Endothelial cell of umbilical vein (primary cell): ENCODE measurements at regions of chr5 and their contacts with region 1.

Region 1: DNA sequence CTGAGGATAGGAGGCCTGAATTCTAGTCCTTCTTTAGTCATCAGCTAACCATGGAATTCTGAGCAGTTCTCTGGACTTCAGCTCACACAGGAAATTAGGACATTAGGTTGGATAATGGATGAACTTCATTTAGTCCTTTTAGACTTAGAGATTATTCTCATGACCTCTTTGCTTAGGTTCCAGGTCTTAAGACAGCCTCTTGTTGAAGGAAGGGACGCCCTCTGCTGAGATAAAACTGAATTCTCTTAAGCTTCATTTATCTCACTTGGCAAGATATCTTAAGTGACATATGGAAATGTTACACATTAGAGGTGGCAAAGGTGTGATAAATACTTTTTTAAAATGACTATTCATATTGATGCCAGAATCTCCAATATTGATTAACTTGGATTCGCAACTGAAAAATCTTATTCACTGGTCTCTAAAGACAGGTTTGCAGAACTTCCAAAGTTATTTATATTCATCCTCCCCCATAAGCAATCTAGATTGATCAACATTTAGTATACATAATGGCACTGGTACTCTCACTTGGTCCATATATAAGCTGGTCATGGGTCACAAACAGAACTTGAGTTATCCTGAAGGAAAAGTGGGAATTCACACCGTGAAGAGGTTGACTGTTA is 16.9 kb upstream of the ZNF366 start:
- DNase-seq: peak; percentile 89
- H3K4me3 ChIP-seq: no peak overlapping the region
- H3K27ac ChIP-seq: peak overlapping the region; percentile 54
- H3K4me1 ChIP-seq: peaks cover 7% of the 10 kb centered on the region
- H3K27me3 ChIP-seq: no peaks in the 10 kb centered on the region
- CTCF ChIP-seq: peak; percentile 39 to 42
- POLR2A ChIP-seq: no peak

Region 2: DNA sequence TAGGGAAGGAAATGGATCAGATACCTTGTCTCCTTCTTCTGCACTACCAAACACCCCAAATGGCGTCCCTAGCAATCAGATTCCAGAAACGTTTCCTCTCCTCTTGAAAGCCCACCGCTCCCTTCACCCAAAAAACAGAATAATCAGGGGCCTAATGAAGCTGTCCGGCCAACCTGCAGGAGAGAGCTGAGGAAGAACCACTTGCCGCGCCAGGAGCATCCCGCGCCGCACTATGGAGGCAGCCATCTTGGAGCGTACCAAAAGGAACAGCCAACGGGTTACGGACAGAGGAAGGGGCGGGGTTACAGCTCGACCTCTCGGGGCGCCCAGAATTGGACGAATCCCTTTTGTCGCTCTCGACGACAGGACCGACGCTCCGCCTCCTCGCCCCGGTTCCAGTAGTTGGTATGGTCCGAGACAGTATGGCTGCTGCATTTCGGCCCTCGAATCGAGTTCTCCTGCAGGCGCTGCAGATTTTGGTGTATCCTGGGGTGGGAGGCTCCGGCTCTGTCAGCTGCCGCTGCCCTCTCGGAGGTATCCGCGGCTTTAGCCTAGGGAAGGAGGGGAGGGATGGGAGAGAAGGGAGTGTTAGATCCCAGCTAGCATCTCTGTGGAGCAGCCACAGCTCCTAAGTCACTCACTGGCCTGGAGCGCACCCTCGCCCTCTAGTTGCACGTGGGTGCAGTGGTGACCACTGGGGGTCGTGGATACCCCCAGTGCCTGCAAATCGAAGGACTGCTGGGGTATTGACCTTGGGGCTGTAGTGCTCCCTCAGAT is 203.9 kb before region 1 on chr5 and contains the starts of genes MRPS27 and PTCD2:
- CTCF ChIA-PET with region 1: interaction called, 8 read pairs
- POLR2A ChIA-PET with region 1: no interaction called
- dilution Hi-C with region 1: no loop called
- intact Hi-C with region 1: loop called (anchors 1 kb)
- DNase-seq: peak; percentile 98
- H3K4me3 ChIP-seq: peak within 1 kb of the TSS; percentile 49 to 80 (median 70)
- H3K27ac ChIP-seq: peak within 1 kb of the TSS; percentile 14
- H3K4me1 ChIP-seq: peaks cover 6% of the 10 kb centered on the region
- H3K27me3 ChIP-seq: no peaks in the 10 kb centered on the region
- CTCF ChIP-seq: peak; percentile 8 to 28
- POLR2A ChIP-seq: peak; percentile 97
- total RNA-seq, gene MRPS27: 58.0 and 67.1 TPM in 2 replicates
- total RNA-seq, gene PTCD2: 6.2 and 6.7 TPM in 2 replicates

Region 3: DNA sequence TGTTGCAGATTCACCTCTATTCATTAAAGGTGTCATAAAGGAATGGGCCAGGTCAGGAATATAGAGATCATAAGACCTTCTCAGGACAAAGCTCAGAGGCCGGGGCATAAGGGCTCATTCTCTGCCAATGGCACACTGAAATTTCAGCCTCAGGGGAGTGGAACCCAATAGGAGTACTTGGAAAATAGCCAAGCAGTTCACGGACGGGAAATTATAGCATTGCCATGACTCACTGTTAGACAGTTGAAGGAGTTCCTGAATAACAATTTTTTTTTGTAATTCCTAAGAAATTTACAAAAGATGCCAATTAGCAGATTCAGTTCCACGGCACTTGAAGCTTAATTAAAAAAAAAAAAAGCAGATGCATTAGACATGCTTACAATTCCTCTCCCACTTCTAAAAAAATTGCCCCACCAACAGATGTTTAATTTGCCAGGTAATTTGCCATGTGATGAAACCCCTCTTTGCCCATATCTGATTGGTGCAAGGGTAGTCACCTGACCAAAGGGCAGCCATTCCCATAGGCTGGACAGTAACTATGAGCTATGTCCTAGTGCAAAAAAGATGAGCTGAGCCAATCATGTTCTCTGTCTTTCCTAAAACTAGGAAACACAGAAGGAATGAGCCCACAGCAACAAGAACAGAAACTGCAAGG is 145.3 kb before region 1 on chr5:
- CTCF ChIA-PET with region 1: interaction called, 15 read pairs
- POLR2A ChIA-PET with region 1: no interaction called
- dilution Hi-C with region 1: no loop called
- intact Hi-C with region 1: no loop called
- DNase-seq: peak; percentile 96
- H3K4me3 ChIP-seq: no peak overlapping the region
- H3K27ac ChIP-seq: peak overlapping the region; percentile 30
- H3K4me1 ChIP-seq: peaks cover 15% of the 10 kb centered on the region
- H3K27me3 ChIP-seq: no peaks in the 10 kb centered on the region
- CTCF ChIP-seq: no peak
- POLR2A ChIP-seq: no peak

Region 4: GRCh38 chr5:72402959-72403628 is 121.0 kb before region 1 on chr5:
- CTCF ChIA-PET with region 1: interaction called, 28 read pairs
- POLR2A ChIA-PET with region 1: no interaction called
- dilution Hi-C with region 1: no loop called
- intact Hi-C with region 1: loop called (anchors 1 kb)
- DNase-seq: peak; percentile 78
- H3K4me3 ChIP-seq: no peak overlapping the region
- H3K27ac ChIP-seq: no peak overlapping the region
- H3K4me1 ChIP-seq: no peaks in the 10 kb centered on the region
- H3K27me3 ChIP-seq: no peaks in the 10 kb centered on the region
- CTCF ChIP-seq: peak; percentile 34 to 35
- POLR2A ChIP-seq: no peak

Region 5: GRCh38 chr5:72451741-72452505 is 72.1 kb before region 1 on chr5:
- CTCF ChIA-PET with region 1: interaction called, 42 read pairs
- POLR2A ChIA-PET with region 1: no interaction called
- dilution Hi-C with region 1: no loop called
- intact Hi-C with region 1: loop called (anchors 1 kb)
- DNase-seq: peak; percentile 98
- H3K4me3 ChIP-seq: no peak overlapping the region
- H3K27ac ChIP-seq: peak overlapping the region; percentile 100
- H3K4me1 ChIP-seq: peaks cover 49% of the 10 kb centered on the region
- H3K27me3 ChIP-seq: no peaks in the 10 kb centered on the region
- CTCF ChIP-seq: no peak
- POLR2A ChIP-seq: peak; percentile 48

Region 6: GRCh38 chr5:72537166-72537565 is 13.1 kb after region 1 on chr5:
- CTCF ChIA-PET with region 1: interaction called, 10 read pairs
- POLR2A ChIA-PET with region 1: no interaction called
- dilution Hi-C with region 1: no loop called
- intact Hi-C with region 1: no loop called
- DNase-seq: no peak
- H3K4me3 ChIP-seq: no peak overlapping the region
- H3K27ac ChIP-seq: no peak overlapping the region
- H3K4me1 ChIP-seq: no peaks in the 10 kb centered on the region
- H3K27me3 ChIP-seq: no peaks in the 10 kb centered on the region
- CTCF ChIP-seq: no peak
- POLR2A ChIP-seq: no peak

Region 7: DNA sequence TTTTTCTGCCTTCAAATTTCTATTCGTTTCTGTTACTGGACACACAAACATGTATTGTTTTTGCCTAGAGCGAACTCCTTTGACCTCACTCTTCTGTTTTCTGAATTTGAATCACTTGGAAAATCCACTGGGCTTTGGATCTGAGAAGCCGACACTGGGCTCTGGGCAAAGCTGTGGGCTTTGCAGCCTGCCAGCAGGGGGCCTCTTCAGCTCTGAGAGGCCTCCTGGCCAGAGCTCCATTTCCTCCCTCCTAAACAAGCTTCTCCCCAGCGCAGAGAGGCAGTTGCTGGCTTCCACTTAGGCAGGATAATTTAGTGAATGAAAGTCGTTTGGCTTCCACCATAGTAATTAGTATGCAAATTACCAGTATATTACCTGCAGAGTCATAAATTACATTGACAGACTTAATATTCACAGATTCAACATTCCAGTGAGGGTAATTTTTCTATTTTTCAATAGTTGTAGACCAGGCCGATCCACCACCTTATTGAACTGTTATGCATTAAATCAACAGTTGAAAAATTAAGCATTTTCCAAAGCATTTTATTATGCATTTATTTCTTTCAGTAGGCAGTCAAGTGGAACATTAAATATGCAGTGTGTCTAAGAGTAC is 87.2 kb after region 1 on chr5:
- CTCF ChIA-PET with region 1: interaction called, 15 read pairs
- POLR2A ChIA-PET with region 1: no interaction called
- dilution Hi-C with region 1: no loop called
- intact Hi-C with region 1: no loop called
- DNase-seq: peak; percentile 85
- H3K4me3 ChIP-seq: no peak overlapping the region
- H3K27ac ChIP-seq: peak overlapping the region; percentile 23
- H3K4me1 ChIP-seq: peaks cover 5% of the 10 kb centered on the region
- H3K27me3 ChIP-seq: no peaks in the 10 kb centered on the region
- CTCF ChIP-seq: peak; percentile 98
- POLR2A ChIP-seq: no peak